ENCODE measurements at regions of chr18 and their contacts with region 1.

Region 1: GRCh38 chr18:7566567-7567473 is at the start of gene PTPRM:
- DNase-seq: peak in 1 of 2 experiments; percentile 78
- H3K4me3 ChIP-seq: peak within 1 kb of the TSS; percentile 91
- H3K27ac ChIP-seq: no peak within 1 kb of the TSS
- H3K4me1 ChIP-seq: peaks cover 14% of the 10 kb centered on the region
- H3K27me3 ChIP-seq: no peaks in the 10 kb centered on the region
- CTCF ChIP-seq: no peak
- total RNA-seq, gene PTPRM: 30.7 and 32.5 TPM in 2 replicates

Region 2: GRCh38 chr18:6741232-6741663 is 825.6 kb before region 1 on chr18:
- CTCF ChIA-PET with region 1: no interaction called
- POLR2A ChIA-PET with region 1: no interaction called
- intact Hi-C with region 1: no loop called
- DNase-seq: no peak
- H3K4me3 ChIP-seq: no peak overlapping the region
- H3K27ac ChIP-seq: no peak overlapping the region
- H3K4me1 ChIP-seq: no peaks in the 10 kb centered on the region
- H3K27me3 ChIP-seq: no peaks in the 10 kb centered on the region; the same call in 1 of the 2 replicates
- CTCF ChIP-seq: no peak

Region 3: DNA sequence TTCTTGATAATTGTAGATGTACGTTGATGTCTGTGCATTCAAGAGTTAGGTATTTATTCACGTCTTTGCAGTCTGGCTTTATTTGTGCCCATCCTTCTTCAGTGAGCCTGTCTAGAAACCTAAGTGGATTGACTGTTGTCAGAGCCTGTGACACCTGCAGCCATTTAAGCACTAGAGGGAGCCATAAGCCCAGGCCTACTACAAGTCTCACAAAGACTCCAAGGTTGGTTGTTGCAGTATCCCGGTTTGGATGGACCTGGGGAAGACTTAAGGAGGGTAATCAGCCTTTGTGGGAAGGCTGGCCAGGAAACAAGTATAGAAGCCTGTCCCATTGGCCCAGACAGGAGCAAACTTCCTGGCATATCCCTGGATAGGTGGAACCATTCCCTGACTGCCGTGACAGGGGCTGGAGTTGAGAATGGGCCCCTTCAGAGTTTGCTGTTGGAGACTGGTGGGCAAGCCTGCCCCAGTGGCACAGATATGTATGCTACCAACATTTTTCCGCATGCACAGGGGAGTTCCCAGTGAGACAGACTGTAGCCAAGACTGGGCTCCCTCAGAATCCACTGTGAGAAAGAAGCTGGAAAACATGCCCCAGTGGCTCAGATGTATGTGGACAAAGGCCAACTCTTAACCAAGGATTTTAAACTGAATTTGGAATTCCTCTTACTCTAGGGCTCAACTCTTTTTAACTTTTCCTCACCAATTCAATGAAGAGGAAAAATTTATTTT is 345.2 kb before region 1 on chr18:
- CTCF ChIA-PET with region 1: interaction called, 3 read pairs
- POLR2A ChIA-PET with region 1: no interaction called
- intact Hi-C with region 1: loop called (anchors 2 kb)
- DNase-seq: peak; percentile 35 to 46
- H3K4me3 ChIP-seq: no peak overlapping the region
- H3K27ac ChIP-seq: no peak overlapping the region
- H3K4me1 ChIP-seq: no peaks in the 10 kb centered on the region
- H3K27me3 ChIP-seq: peaks cover 17% of the 10 kb centered on the region; the same call in 1 of the 2 replicates
- CTCF ChIP-seq: peak; percentile 76

Region 4: DNA sequence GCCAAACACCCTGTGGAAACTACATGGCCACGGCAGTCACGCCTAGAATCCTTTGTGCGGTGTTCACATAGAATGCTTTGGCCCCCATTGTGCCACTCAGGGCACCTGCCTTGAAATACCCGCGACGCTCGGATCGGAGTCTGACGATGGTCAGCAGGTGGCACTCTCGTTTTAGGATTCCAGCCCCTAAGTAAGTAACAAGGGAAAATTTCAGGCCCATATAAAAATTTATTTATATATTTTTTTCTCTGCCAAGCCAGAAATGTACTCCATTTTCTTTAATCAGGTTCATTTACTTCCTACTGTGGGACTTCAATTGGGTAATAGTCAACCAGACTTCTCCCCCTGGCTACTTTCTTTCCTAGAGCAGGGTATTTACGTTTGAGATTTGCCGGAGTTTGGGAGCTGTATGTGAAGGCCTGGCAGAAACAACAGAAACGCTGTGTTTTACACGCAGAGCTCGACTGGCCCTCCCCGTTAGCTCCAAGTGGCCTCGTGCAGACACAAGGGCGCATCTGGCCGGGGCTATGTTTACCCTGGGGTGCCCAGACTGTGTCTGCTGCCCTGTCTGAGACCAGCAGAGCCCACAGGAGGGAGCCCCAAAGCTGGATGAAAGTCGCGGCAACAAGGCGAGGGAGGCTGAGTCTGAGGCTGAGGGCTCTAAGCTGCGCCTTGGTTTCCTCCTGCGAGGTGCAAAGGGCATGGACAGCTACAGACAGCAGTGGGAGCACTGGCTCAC is 294.3 kb before region 1 on chr18:
- CTCF ChIA-PET with region 1: interaction called, 15 read pairs
- POLR2A ChIA-PET with region 1: no interaction called
- intact Hi-C with region 1: loop called (anchors 1 kb)
- DNase-seq: peak; percentile 39 to 50
- H3K4me3 ChIP-seq: no peak overlapping the region
- H3K27ac ChIP-seq: no peak overlapping the region
- H3K4me1 ChIP-seq: no peaks in the 10 kb centered on the region
- H3K27me3 ChIP-seq: peaks cover 11% of the 10 kb centered on the region
- CTCF ChIP-seq: peak; percentile 67

Region 5: GRCh38 chr18:7778181-7778580 is 211.4 kb after region 1 on chr18:
- CTCF ChIA-PET with region 1: no interaction called
- POLR2A ChIA-PET with region 1: no interaction called
- intact Hi-C with region 1: loop called (anchors 10 kb)
- DNase-seq: no peak
- H3K4me3 ChIP-seq: no peak overlapping the region
- H3K27ac ChIP-seq: no peak overlapping the region
- H3K4me1 ChIP-seq: no peaks in the 10 kb centered on the region
- H3K27me3 ChIP-seq: no peaks in the 10 kb centered on the region
- CTCF ChIP-seq: no peak

Region 6: DNA sequence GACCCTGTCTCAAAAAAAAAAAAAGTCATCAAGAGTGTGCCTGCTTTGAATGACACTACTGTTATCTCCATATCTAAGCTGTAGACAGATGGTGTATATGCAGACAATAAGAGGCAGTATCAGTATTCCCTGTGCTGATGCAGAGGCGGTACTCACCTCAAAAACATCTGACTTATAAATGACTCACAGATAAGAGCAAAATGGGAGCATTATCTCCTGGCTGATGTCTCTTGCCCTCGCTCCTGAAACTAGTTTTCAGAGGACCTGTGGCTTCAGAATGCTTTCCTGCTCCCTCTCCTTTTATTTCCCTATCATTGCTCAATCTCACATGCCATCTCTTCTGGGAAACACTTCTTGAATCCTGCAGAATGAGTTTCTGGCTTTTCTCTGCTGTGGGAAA is 289.9 kb after region 1 on chr18:
- CTCF ChIA-PET with region 1: no interaction called
- POLR2A ChIA-PET with region 1: no interaction called
- intact Hi-C with region 1: loop called (anchors 10 kb)
- DNase-seq: peak in 1 of 2 experiments; percentile 74
- H3K4me3 ChIP-seq: no peak overlapping the region
- H3K27ac ChIP-seq: peak overlapping the region; percentile 41
- H3K4me1 ChIP-seq: peaks cover 27% of the 10 kb centered on the region
- H3K27me3 ChIP-seq: no peaks in the 10 kb centered on the region
- CTCF ChIP-seq: no peak

Region 7: DNA sequence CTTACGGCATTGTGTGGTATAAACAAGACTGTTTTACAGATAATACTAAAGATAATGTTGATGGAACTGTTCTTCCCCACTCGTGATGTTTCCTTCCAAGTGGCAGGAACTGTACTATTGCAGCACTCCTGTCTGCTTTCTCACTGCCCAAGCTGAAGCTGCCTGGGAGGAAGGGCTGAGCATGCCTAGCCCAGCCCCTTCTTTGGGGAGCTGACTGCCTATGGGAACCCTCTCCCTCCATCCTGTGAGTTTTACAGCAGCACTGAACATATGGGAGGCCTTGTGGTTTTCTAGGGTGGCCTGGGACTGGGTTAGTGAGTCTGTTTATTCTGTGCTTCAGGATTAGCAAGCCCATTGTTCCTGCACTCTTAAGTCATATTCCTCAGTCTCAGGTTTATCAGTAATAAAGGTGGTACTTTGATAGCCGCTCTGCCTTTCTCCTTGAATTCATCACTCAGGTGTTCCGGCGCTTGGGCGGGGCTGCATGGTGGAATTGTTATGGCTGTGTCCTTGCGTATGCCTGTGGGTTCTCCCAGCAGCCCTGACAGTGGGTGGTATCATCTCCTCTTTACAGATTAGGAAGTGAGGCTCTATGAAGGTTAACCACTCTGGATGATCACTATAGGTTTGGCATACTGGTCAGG is 380.0 kb after region 1 on chr18:
- CTCF ChIA-PET with region 1: no interaction called
- POLR2A ChIA-PET with region 1: no interaction called
- intact Hi-C with region 1: loop called (anchors 5 kb)
- DNase-seq: peak; percentile 64 to 65
- H3K4me3 ChIP-seq: peak overlapping the region; percentile 54
- H3K27ac ChIP-seq: peak overlapping the region; percentile 85
- H3K4me1 ChIP-seq: peaks cover 42% of the 10 kb centered on the region
- H3K27me3 ChIP-seq: no peaks in the 10 kb centered on the region
- CTCF ChIP-seq: no peak

Region 8: GRCh38 chr18:8493141-8493540 is 926.3 kb after region 1 on chr18:
- CTCF ChIA-PET with region 1: interaction called, 10 read pairs
- POLR2A ChIA-PET with region 1: no interaction called
- intact Hi-C with region 1: no loop called
- DNase-seq: no peak
- H3K4me3 ChIP-seq: no peak overlapping the region
- H3K27ac ChIP-seq: no peak overlapping the region
- H3K4me1 ChIP-seq: no peaks in the 10 kb centered on the region
- H3K27me3 ChIP-seq: peaks cover 56% of the 10 kb centered on the region
- CTCF ChIP-seq: no peak